ENCODE measurements at regions of chr2 and their contacts with region 1.

Region 1: GRCh38 chr2:119641562-119642258 is 37.3 kb upstream of the TMEM177 start:
- DNase-seq: peak; percentile 88
- H3K4me3 Mint-ChIP-seq: no peak overlapping the region
- H3K27ac Mint-ChIP-seq: no peak overlapping the region
- H3K4me1 Mint-ChIP-seq: peaks cover 7% of the 10 kb centered on the region
- H3K27me3 Mint-ChIP-seq: no peaks in the 10 kb centered on the region
- CTCF ChIP-seq: peak; percentile 91

Region 2: GRCh38 chr2:119407430-119408220 is 234.1 kb before region 1 on chr2:
- CTCF ChIA-PET with region 1: interaction called, 6 read pairs
- POLR2A ChIA-PET with region 1: no interaction called
- intact Hi-C with region 1: loop called (anchors 1 kb)
- DNase-seq: peak; percentile 64
- H3K4me3 Mint-ChIP-seq: no peak overlapping the region
- H3K27ac Mint-ChIP-seq: no peak overlapping the region
- H3K4me1 Mint-ChIP-seq: peaks cover 6% of the 10 kb centered on the region
- H3K27me3 Mint-ChIP-seq: no peaks in the 10 kb centered on the region
- CTCF ChIP-seq: peak; percentile 66

Region 3: DNA sequence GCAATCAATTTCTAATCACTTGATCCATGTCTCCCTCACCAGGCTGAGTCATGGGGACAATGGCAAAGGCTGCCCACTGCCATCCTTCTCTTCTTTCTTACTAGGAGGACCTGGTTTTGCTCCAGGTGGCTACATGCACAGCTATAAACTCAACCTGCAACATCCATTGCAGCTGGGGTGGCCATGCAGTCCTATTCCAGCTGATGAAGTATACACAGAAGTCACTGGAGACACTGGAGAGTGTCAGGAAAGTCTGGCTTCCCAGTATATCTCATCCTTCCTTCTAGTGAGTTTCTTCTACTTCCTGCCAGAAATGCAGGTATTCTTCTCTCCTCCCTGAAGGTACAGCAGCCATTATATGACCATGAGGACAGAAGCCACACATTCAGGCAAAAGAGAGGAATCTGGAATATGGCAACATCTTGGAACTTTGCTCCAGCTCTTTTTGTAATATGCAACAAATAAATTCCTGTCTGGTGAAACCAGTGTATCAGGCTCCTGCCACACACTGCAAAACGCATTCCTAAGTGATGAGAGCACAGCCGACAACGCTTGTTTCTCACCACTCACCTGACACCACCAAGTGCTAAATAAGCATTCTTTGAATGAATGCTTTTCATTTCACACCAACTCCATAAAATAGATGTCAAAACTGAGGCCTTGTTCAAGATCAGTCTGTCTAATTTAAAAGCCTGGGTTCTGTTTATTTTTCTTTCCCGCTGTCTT is 149.7 kb before region 1 on chr2:
- CTCF ChIA-PET with region 1: interaction called, 3 read pairs
- POLR2A ChIA-PET with region 1: no interaction called
- intact Hi-C with region 1: loop called (anchors 10 kb)
- DNase-seq: peak; percentile 81
- H3K4me3 Mint-ChIP-seq: no peak overlapping the region
- H3K27ac Mint-ChIP-seq: peak overlapping the region; percentile 77
- H3K4me1 Mint-ChIP-seq: peaks cover 36% of the 10 kb centered on the region
- H3K27me3 Mint-ChIP-seq: peaks cover 2% of the 10 kb centered on the region
- CTCF ChIP-seq: no peak

Region 4: GRCh38 chr2:119659601-119660342 is 18.1 kb after region 1 on chr2:
- CTCF ChIA-PET with region 1: interaction called, 75 read pairs
- POLR2A ChIA-PET with region 1: no interaction called
- intact Hi-C with region 1: loop called (anchors 1 kb)
- DNase-seq: peak; percentile 62
- H3K4me3 Mint-ChIP-seq: no peak overlapping the region
- H3K27ac Mint-ChIP-seq: no peak overlapping the region
- H3K4me1 Mint-ChIP-seq: no peaks in the 10 kb centered on the region
- H3K27me3 Mint-ChIP-seq: peaks cover 20% of the 10 kb centered on the region
- CTCF ChIP-seq: peak; percentile 86

Region 5: GRCh38 chr2:119826370-119826961 is 184.8 kb after region 1 on chr2:
- CTCF ChIA-PET with region 1: interaction called, 4 read pairs
- POLR2A ChIA-PET with region 1: no interaction called
- intact Hi-C with region 1: loop called (anchors 5 kb)
- DNase-seq: peak; percentile 51
- H3K4me3 Mint-ChIP-seq: no peak overlapping the region
- H3K27ac Mint-ChIP-seq: no peak overlapping the region
- H3K4me1 Mint-ChIP-seq: peaks cover 18% of the 10 kb centered on the region
- H3K27me3 Mint-ChIP-seq: no peaks in the 10 kb centered on the region
- CTCF ChIP-seq: peak; percentile 50

Region 6: DNA sequence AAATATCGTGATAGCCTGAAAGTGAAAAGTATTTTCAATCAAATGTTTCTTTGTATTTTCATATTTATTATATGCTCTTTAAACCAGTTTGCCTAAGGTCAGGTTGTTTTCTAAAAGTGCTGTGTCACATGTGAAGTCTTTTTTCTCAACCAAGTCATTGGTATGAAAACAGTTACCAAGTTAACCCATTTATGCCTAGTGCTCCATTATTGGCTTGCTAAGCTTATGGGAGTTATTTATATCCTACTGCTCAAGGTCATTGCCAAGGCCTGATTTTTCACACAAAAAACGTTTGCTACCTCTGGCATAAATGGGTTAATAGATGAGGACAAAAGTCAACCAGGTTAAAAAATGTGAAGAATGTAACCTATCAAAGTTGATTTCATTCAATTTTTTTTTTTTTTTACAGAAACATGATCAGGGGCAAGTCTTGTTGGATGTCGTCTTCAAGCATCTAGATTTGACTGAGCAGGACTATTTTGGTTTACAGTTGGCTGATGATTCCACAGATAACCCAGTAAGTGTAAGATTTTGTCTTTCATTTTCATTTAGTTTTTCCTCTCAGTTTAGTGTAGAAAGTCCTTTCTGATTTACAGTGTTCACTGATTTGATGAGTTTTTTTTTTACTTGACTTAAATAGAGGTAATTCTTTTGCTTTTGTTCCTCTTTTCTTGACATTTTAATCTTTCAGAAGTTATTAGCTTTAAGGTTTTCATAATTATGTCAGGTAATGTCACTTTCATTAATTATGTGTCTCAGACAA is 220.6 kb after region 1 on chr2:
- CTCF ChIA-PET with region 1: no interaction called
- POLR2A ChIA-PET with region 1: no interaction called
- intact Hi-C with region 1: no loop called
- DNase-seq: no peak
- H3K4me3 Mint-ChIP-seq: no peak overlapping the region
- H3K27ac Mint-ChIP-seq: no peak overlapping the region
- H3K4me1 Mint-ChIP-seq: peaks cover 20% of the 10 kb centered on the region
- H3K27me3 Mint-ChIP-seq: no peaks in the 10 kb centered on the region
- CTCF ChIP-seq: no peak